ENCODE measurements at regions of chr4 and their contacts with region 1.

Region 1: GRCh38 chr4:159252491-159252890 is 149.6 kb downstream of the RAPGEF2 start:
- DNase-seq: no peak
- ATAC-seq: peak; percentile 72
- H3K4me3 ChIP-seq: no peak overlapping the region
- H3K27ac ChIP-seq: no peak overlapping the region
- H3K4me1 ChIP-seq: peaks cover 8% of the 10 kb centered on the region
- H3K27me3 ChIP-seq: no peaks in the 10 kb centered on the region
- CTCF ChIP-seq: no peak
- POLR2A ChIP-seq: no peak
- RAD21 ChIP-seq: no peak

Region 2: DNA sequence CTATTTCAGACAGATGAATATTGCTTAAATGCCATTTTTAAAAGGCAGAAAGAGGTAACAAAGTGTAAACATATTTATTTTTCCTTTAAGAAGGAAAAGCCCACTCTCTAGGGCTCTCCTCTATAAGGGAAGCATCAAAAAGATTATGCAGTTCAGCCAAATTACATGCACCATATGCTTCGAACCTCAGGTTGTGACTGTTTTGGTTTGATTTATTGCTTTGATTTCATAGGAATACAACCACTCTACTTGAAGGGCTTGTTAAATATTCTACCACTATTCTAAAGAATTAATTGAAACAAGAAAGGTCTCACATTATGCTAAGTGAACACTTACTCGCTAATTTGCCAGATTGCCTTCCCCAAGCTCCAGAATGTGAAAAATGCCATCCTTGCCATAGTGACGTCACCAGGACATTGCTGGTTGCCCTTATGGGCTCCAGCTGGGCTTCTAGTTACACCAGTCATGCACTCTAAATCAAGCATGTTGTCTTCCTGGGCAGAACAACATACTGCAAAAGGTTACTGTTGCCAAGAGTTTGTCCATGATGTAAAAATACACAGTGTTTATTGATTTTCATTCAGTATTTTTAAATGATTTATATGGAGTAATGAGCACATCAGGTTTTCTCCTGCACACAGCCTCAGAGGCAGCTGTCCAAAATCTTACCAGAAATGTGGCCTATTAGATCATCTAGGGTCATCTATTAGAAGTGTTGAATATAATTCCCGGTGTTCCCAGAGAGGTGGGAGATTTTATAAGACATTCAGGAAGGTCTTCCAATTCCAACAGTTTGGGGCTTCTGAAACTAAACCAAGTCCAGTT is 314.1 kb before region 1 on chr4:
- CTCF ChIA-PET with region 1: no interaction called
- POLR2A ChIA-PET with region 1: no interaction called
- dilution Hi-C with region 1: no loop called
- in situ Hi-C with region 1: no loop called
- intact Hi-C with region 1: no loop called
- DNase-seq: peak; percentile 40
- ATAC-seq: no peak
- H3K4me3 ChIP-seq: no peak overlapping the region
- H3K27ac ChIP-seq: no peak overlapping the region
- H3K4me1 ChIP-seq: no peaks in the 10 kb centered on the region
- H3K27me3 ChIP-seq: no peaks in the 10 kb centered on the region
- CTCF ChIP-seq: no peak
- POLR2A ChIP-seq: no peak
- RAD21 ChIP-seq: no peak

Region 3: GRCh38 chr4:159266981-159267868 is 14.7 kb after region 1 on chr4:
- CTCF ChIA-PET with region 1: no interaction called
- POLR2A ChIA-PET with region 1: no interaction called
- dilution Hi-C with region 1: no loop called
- in situ Hi-C with region 1: no loop called
- intact Hi-C with region 1: loop called (anchors 2 kb)
- DNase-seq: peak; percentile 48
- ATAC-seq: peak; percentile 65
- H3K4me3 ChIP-seq: peak overlapping the region; percentile 20; the same call in 1 of the 2 replicates
- H3K27ac ChIP-seq: peak overlapping the region; percentile 51; the same call in 1 of the 2 replicates
- H3K4me1 ChIP-seq: peaks cover 15% of the 10 kb centered on the region
- H3K27me3 ChIP-seq: no peaks in the 10 kb centered on the region
- CTCF ChIP-seq: no peak
- POLR2A ChIP-seq: no peak
- RAD21 ChIP-seq: no peak

Measured in IMR-90 (cell line).